ENCODE measurements at regions of chr5 and their contacts with region 1.

Region 1: GRCh38 chr5:42994246-42995151 is 45.6 kb downstream of the ANXA2R start:
- DNase-seq: peak; percentile 93
- H3K4me3 Mint-ChIP-seq: peak overlapping the region; percentile 87
- H3K27ac Mint-ChIP-seq: peak overlapping the region; percentile 94
- H3K4me1 Mint-ChIP-seq: peaks cover 25% of the 10 kb centered on the region
- H3K27me3 Mint-ChIP-seq: no peaks in the 10 kb centered on the region

Region 2: DNA sequence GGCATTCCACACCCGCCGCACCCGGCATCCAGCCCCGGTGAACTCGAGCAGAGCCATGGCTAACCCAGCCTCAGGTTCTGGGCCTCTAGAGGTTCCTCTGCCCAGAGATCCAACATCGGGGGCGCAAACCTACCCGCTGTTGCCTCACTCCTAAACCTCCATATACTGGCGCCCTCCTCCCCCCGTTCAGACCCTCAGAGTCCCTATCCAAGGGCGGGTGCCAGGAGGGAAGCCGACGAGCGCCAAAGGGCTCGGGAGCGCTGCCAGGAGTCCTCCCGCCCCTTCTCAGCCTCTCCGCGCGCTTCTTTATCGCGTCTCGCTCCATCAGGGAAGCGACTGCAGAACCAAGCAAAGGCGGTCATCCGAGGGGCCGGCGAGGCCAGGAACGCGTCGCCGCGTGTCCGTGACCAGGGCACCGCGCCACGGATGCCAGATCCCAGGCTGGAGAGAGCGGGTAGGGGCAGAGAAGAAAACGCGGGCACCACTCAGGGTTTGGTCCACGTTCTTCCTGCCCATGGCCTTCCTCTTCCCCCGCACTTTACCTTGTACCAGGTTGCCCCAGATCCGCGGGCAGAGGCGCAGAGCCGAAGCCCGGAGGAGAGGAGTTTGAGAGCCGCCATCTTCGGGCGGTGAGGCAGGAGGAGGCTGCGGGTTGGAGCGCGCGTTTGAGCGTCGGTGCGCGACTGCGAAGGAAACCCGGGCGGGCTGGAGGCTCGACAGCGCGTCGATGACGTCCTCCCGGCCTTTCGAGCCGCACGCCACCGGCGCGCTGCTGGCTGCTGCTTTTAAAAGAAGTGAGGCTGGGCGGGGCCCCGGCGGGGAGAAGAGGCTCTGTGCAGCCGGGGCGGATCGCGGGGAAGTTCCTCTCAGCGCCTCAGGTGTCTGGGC is 1124.5 kb before region 1 on chr5 and contains the start of gene OXCT1:
- CTCF ChIA-PET with region 1: no interaction called
- POLR2A ChIA-PET with region 1: no interaction called
- intact Hi-C with region 1: loop called (anchors 5 kb)
- DNase-seq: peak; percentile 95
- H3K4me3 Mint-ChIP-seq: peak within 1 kb of the TSS; percentile 92
- H3K27ac Mint-ChIP-seq: peak within 1 kb of the TSS; percentile 87
- H3K4me1 Mint-ChIP-seq: peaks cover 56% of the 10 kb centered on the region
- H3K27me3 Mint-ChIP-seq: no peaks in the 10 kb centered on the region
- total RNA-seq, gene OXCT1: 110 to 117 TPM

Region 3: GRCh38 chr5:42950440-42951292 is 43.8 kb before region 1 on chr5:
- CTCF ChIA-PET with region 1: interaction called, 84 read pairs
- POLR2A ChIA-PET with region 1: interaction called, 73 read pairs
- intact Hi-C with region 1: loop called (anchors 1 kb)
- DNase-seq: peak; percentile 86
- H3K4me3 Mint-ChIP-seq: peak overlapping the region; percentile 94
- H3K27ac Mint-ChIP-seq: peak overlapping the region; percentile 97
- H3K4me1 Mint-ChIP-seq: peaks cover 30% of the 10 kb centered on the region
- H3K27me3 Mint-ChIP-seq: no peaks in the 10 kb centered on the region

Region 4: DNA sequence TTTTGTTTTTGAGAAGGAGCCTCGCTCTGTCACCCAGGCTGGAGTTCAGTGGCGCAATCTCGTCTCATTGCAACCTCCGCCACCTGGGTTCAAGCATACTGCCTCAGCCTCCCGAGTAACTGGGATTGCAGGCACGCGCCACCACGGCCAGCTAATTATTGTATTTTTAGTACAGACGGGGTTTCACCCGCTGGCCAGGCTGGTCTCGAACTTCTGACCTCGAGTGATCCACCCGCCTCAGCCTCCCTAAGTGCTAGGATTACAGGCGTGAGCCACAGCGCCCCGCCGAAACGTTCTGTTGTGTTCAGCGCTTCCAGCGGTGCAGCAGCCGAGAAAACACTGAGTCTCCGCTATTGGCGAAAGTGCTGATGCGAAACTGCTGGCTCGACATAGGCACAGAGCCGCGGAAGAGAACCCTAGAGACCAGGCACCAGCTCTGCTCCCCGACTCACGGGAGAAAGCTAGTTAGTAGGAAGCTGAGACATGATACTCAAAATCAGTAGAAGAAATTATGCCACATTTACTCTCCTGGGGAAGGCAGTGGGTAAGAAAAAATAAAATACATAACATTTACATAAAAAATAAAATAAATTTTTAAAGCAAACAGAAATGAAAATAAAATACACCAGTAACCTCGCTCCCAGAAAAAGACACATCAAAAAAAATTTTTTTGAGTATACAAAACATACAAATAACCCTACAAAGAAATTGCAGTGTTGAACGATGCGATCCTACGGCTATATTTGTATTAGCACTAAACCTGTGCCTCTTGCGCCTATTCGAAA is 14.1 kb after region 1 on chr5:
- CTCF ChIA-PET with region 1: interaction called, 62 read pairs
- POLR2A ChIA-PET with region 1: interaction called, 48 read pairs
- intact Hi-C with region 1: loop called (anchors 1 kb)
- DNase-seq: peak; percentile 93
- H3K4me3 Mint-ChIP-seq: peak overlapping the region; percentile 81
- H3K27ac Mint-ChIP-seq: peak overlapping the region; percentile 88
- H3K4me1 Mint-ChIP-seq: peaks cover 26% of the 10 kb centered on the region
- H3K27me3 Mint-ChIP-seq: no peaks in the 10 kb centered on the region

Measured in activated CD4-positive, alpha-beta memory T cell treated with anti-CD3 and anti-CD28 coated beads for 36 hours (primary cell).